ENCODE measurements at regions of chr10 and their contacts with region 1.

Region 1: GRCh38 chr10:86585037-86585725 is 63.6 kb upstream of the WAPL start:
- DNase-seq: peak; percentile 79
- ATAC-seq: peak; percentile 89
- H3K4me3 ChIP-seq: no peak overlapping the region
- H3K27ac ChIP-seq: no peak overlapping the region
- H3K4me1 ChIP-seq: no peaks in the 10 kb centered on the region; the same call in 1 of the 2 replicates
- H3K27me3 ChIP-seq: no peaks in the 10 kb centered on the region
- CTCF ChIP-seq: peak; percentile 90

Region 2: GRCh38 chr10:86399879-86400704 is 185.1 kb before region 1 on chr10:
- CTCF ChIA-PET with region 1: interaction called, 5 read pairs
- POLR2A ChIA-PET with region 1: no interaction called
- intact Hi-C with region 1: loop called (anchors 1 kb)
- DNase-seq: peak; percentile 90
- ATAC-seq: peak; percentile 94
- H3K4me3 ChIP-seq: peak overlapping the region; percentile 82
- H3K27ac ChIP-seq: peak overlapping the region; percentile 48
- H3K4me1 ChIP-seq: peaks cover 10% of the 10 kb centered on the region
- H3K27me3 ChIP-seq: no peaks in the 10 kb centered on the region
- CTCF ChIP-seq: peak; percentile 76

Measured in PC-3 (cell line).